ENCODE measurements at regions of chr12 and their contacts with region 1.

Region 1: DNA sequence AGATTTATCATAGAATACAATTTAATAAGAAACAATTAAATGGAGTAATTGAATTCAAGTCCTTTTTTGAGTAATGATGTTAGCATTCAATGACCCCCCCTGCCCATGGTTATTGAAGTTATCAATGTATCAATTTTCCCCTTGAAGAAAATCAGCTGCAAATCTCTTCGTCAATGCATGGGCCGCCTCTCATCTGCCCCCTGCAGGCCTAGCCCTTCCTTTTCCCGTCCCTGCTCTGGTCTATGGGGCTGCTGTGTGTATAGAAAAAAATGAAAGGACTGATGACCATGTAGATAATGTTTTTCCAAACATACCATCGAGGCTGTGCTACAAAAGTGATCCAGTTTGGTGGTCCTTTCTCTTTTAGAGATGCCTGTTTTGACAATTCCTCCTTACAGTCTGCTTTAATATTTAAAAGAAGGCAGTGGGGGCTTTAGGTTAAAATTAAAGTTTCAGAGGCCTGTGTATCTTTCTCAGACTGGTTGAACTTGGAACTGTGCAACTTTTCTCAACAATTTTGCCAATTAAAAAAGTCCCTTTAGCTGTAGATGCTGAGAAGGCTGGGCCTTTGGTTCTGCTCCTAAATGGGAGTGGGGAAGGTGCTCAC is 98.4 kb downstream of the APAF1 start:
- DNase-seq: peak; percentile 83
- H3K4me3 Mint-ChIP-seq: peak overlapping the region; percentile 68
- H3K27ac Mint-ChIP-seq: peak overlapping the region; percentile 97
- H3K4me1 Mint-ChIP-seq: peaks cover 52% of the 10 kb centered on the region
- H3K27me3 Mint-ChIP-seq: peaks cover 11% of the 10 kb centered on the region

Region 2: GRCh38 chr12:98593351-98594049 is 149.9 kb before region 1 on chr12 and contains the start of gene SLC25A3:
- intact Hi-C with region 1: loop called (anchors 2 kb)
- DNase-seq: peak; percentile 98
- H3K4me3 Mint-ChIP-seq: peak within 1 kb of the TSS; percentile 98
- H3K27ac Mint-ChIP-seq: peak within 1 kb of the TSS; percentile 99
- H3K4me1 Mint-ChIP-seq: peaks cover 19% of the 10 kb centered on the region
- H3K27me3 Mint-ChIP-seq: peaks cover 1% of the 10 kb centered on the region
- total RNA-seq, gene SLC25A3: 598 and 612 TPM in 2 replicates

Region 3: GRCh38 chr12:98606357-98606988 is 137.0 kb before region 1 on chr12:
- intact Hi-C with region 1: no loop called
- DNase-seq: no peak
- H3K4me3 Mint-ChIP-seq: no peak overlapping the region
- H3K27ac Mint-ChIP-seq: no peak overlapping the region
- H3K4me1 Mint-ChIP-seq: peaks cover 5% of the 10 kb centered on the region
- H3K27me3 Mint-ChIP-seq: no peaks in the 10 kb centered on the region

Region 4: GRCh38 chr12:98653866-98654493 is 89.5 kb before region 1 on chr12:
- intact Hi-C with region 1: loop called (anchors 5 kb)
- DNase-seq: peak; percentile 75
- H3K4me3 Mint-ChIP-seq: no peak overlapping the region
- H3K27ac Mint-ChIP-seq: no peak overlapping the region
- H3K4me1 Mint-ChIP-seq: peaks cover 18% of the 10 kb centered on the region
- H3K27me3 Mint-ChIP-seq: no peaks in the 10 kb centered on the region

Region 5: GRCh38 chr12:98725476-98726247 is 17.8 kb before region 1 on chr12:
- intact Hi-C with region 1: loop called (anchors 1 kb)
- DNase-seq: peak; percentile 84
- H3K4me3 Mint-ChIP-seq: no peak overlapping the region
- H3K27ac Mint-ChIP-seq: peak overlapping the region; percentile 39
- H3K4me1 Mint-ChIP-seq: peaks cover 14% of the 10 kb centered on the region
- H3K27me3 Mint-ChIP-seq: no peaks in the 10 kb centered on the region

Region 6: DNA sequence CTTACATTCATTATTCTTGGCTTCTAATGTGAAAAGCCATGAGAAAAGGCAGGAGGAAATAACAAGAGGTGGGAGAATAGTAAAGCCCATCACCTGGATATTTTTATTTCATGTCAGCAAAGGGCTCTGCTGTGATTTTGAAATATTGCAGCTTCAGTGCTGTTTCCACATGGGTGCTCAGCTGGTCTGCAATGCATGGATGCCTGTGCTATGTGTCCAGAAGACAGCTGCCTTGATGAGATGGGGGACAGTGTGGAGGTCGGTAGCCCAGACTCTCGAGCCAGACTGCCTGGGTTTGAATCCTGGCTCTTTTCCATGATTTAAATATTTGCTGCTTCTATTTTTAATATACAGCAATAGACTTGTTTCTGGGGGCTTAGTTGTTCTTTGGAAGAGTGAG is 426.6 kb after region 1 on chr12:
- intact Hi-C with region 1: no loop called
- DNase-seq: no peak
- H3K4me3 Mint-ChIP-seq: no peak overlapping the region
- H3K27ac Mint-ChIP-seq: no peak overlapping the region
- H3K4me1 Mint-ChIP-seq: no peaks in the 10 kb centered on the region
- H3K27me3 Mint-ChIP-seq: no peaks in the 10 kb centered on the region

Region 7: DNA sequence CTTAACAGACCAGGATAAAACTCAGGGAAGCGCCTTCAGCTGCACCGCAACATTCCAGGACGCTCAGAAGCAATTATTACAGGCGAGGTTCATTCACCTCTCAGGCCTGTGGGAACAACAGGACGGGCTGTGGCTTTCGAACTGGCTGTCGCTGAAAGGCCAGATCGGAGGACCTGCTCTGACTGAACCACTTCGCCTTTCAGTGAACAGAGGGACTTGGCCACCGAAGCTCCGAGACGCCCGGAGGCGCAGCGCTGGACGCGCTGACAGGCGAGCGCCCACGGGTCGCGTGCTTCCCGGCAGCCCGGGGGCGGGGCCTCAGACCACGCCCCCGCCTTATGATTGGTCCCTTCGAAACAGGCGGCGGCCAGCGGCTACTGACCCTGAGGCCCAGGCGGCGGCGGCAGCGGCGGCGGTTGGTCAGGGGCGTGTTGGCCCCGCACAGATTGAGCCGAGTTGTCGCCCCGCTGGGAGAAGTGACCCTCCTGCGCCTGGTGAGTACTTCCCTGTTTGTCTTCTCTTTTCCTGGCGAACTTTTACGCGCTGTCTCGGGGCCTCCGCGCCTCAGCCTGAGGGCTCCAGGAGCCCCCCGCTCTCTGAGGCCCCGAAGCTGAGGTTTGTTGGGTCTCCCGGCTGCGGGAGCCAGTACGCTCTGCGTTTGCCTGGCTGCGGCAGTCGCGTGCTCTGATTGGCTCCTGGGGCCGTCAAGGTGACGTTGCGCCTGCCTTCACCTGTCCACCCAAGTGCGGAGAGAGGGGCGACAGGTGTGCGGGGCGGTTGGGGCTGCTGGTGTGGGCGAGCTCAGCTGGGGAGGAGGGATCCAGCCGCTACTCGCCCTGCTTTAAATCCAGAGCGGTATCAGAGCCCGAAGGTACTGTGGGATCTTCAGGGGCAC is 1830.1 kb after region 1 on chr12 and contains the start of gene GAS2L3:
- intact Hi-C with region 1: loop called (anchors 5 kb)
- DNase-seq: peak; percentile 93
- H3K4me3 Mint-ChIP-seq: peak within 1 kb of the TSS; percentile 90
- H3K27ac Mint-ChIP-seq: peak within 1 kb of the TSS; percentile 81
- H3K4me1 Mint-ChIP-seq: peaks cover 10% of the 10 kb centered on the region
- H3K27me3 Mint-ChIP-seq: peaks cover 34% of the 10 kb centered on the region
- total RNA-seq, gene GAS2L3: 1.6 and 1.7 TPM in 2 replicates

Measured in activated CD4-positive, alpha-beta T cell treated with anti-CD3 and anti-CD28 coated beads, Interleukin-2, amount 10 ng/mL, durations not matched to agents 24 days and 14 days (primary cell).